ENCODE measurements at regions of chr2 and their contacts with region 1.

Region 1: DNA sequence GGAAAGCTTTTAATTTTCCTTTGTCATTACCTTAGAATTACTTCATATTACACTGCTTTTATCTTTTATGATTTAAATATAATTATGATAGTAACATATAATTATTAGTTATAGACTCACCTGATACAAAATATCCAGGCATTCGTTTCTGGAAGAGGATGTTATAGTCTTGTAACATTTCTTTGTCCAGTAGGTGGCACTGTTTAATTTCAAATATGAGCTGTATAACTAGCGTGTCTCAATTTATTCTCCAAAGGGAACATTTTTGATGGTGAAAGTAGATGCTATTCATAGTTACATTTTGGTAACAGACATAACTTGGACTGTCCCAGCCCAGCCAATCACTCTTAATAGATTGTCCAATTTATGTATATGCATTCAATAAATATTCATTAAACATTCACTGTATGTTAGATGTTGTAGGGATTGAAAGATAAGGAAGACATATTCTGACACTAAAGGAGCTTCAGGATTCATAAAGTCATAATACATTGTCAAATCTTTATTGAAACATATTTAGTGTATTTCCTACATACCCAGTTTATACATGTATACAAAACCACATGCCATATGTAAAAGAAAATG is 19.2 kb downstream of the DAW1 start:
- DNase-seq: no peak
- H3K4me3 Mint-ChIP-seq: no peak overlapping the region
- H3K27ac Mint-ChIP-seq: no peak overlapping the region
- H3K4me1 Mint-ChIP-seq: no peaks in the 10 kb centered on the region
- H3K27me3 Mint-ChIP-seq: peaks cover 2% of the 10 kb centered on the region

Region 2: GRCh38 chr2:228048838-228049490 is 158.4 kb after region 1 on chr2:
- CTCF ChIA-PET with region 1: no interaction called
- intact Hi-C with region 1: loop called (anchors 5 kb)
- DNase-seq: peak; percentile 4
- H3K4me3 Mint-ChIP-seq: no peak overlapping the region
- H3K27ac Mint-ChIP-seq: no peak overlapping the region
- H3K4me1 Mint-ChIP-seq: no peaks in the 10 kb centered on the region
- H3K27me3 Mint-ChIP-seq: no peaks in the 10 kb centered on the region

Region 3: GRCh38 chr2:228657807-228658402 is 767.3 kb after region 1 on chr2:
- CTCF ChIA-PET with region 1: no interaction called
- intact Hi-C with region 1: loop called (anchors 2 kb)
- DNase-seq: no peak
- H3K4me3 Mint-ChIP-seq: no peak overlapping the region
- H3K27ac Mint-ChIP-seq: no peak overlapping the region
- H3K4me1 Mint-ChIP-seq: no peaks in the 10 kb centered on the region
- H3K27me3 Mint-ChIP-seq: no peaks in the 10 kb centered on the region

Region 4: GRCh38 chr2:229273723-229274338 is 1383.2 kb after region 1 on chr2:
- CTCF ChIA-PET with region 1: interaction called, 10 read pairs
- intact Hi-C with region 1: loop called (anchors 1 kb)
- DNase-seq: no peak
- H3K4me3 Mint-ChIP-seq: no peak overlapping the region
- H3K27ac Mint-ChIP-seq: no peak overlapping the region
- H3K4me1 Mint-ChIP-seq: peaks cover 2% of the 10 kb centered on the region
- H3K27me3 Mint-ChIP-seq: peaks cover 25% of the 10 kb centered on the region

Region 5: DNA sequence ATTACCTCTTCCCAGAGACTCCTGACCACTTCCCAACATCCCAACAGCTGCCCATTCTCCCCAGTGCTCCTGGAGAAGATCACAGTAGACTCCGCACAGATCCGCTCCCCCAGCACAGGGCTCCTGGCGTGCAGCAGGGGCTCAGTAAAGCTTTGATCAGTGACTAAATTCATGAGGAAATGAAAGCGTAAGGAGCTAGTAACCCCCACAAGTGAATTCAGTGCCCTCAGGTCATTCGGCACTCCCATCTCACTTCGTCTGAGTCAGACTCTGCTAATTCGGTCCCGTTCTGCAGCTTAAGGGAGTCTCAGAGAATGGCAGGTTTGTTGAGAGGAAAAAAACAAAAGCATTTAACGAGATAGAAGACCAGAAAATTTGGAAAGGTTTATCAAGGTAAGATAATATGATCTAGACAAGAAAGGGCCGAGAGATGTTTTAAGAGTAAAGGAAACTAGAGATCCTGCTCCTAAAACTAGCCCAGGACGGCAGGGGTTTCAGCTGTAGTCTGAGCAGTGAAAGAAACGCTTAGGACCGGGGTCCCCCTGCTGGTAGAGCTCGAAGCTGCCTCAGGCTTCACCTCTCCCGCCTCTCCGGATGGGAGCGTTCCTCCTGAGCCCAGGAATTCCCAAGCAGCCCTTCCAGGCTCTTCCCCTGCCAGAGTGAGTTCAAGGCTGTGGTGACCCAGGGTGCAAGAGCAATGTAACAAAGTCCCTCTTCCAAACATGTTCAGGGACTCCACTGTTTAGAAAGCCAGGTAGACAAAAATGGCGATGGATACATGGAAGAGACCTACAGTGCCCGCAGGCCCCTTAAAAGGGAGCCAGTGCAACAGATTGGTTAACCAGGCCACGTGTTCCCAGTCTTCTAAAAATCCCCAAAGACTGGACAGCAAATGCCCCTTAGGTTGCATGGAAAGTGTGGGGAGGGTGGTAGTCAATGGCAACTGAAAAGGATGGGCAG is 1696.4 kb after region 1 on chr2:
- CTCF ChIA-PET with region 1: interaction called, 3 read pairs
- intact Hi-C with region 1: loop called (anchors 2 kb)
- DNase-seq: peak; percentile 53
- H3K4me3 Mint-ChIP-seq: no peak overlapping the region
- H3K27ac Mint-ChIP-seq: no peak overlapping the region
- H3K4me1 Mint-ChIP-seq: no peaks in the 10 kb centered on the region
- H3K27me3 Mint-ChIP-seq: peaks cover 18% of the 10 kb centered on the region